K562 (cell line): ENCODE measurements at regions of chr22 and their contacts with region 1.

Region 1: GRCh38 chr22:38201710-38202436 is at the start of gene MAFF:
- DNase-seq: peak; percentile 89 to 97 (median 93)
- ATAC-seq: peak; percentile 85
- H3K4me3 ChIP-seq: peak within 1 kb of the TSS; percentile 82
- H3K27ac ChIP-seq: peak within 1 kb of the TSS; percentile 95
- H3K4me1 ChIP-seq: peaks cover 4 to 22% of the 10 kb centered on the region in 2 experiments; a peak in 3 of 5 replicates
- H3K27me3 ChIP-seq: no peaks in the 10 kb centered on the region
- CTCF ChIP-seq: no peak
- EP300 ChIP-seq: no peak
- POLR2A ChIP-seq: peak; percentile 79
- RAD21 ChIP-seq: no peak
- polyA plus RNA-seq, gene MAFF: 0.51 to 0.60 TPM

Region 2: DNA sequence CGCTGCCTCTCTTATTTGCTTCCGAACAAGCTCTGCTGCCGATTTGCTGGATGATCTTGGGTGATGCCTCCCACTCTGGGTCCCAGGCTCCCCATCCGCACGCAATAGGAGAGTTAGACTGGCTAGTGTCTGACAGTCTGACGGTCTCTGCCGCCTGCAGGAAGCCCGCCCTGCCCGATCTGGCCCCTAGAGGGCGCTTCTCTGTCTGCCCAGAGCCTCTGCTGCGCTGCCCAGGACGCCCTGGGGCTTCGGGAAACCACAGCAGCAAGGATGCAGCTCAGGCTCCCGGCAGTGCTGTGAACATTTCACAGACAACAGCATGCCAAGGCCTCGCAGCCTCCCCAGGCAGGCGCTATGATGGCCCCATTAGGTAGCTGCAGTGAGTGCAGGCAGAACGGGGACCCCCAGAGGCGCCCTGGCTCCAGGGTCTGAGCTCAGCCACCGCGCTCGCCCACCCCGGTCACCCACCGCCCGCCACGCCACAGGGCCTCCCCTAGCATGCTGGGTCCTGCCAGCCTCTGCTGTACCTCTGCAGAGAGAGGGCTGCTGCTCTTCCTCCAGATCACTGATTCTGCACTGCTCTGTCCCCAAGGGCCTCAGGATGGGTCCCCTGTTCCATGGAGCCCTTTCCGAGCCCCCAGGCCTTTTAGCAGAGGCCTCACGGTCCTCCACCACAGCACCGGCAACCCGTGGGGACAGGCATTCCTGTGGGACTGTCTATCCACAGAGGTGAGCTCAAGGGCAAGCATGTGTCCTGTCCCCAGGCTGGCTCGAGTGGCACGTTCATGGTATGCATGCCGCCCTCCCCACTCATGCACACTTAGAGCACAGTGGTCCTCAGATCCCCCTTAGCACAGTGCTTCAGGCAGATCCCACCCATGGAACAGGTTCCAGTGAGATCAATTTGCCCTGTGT is 87.1 kb before region 1 on chr22:
- CTCF ChIA-PET with region 1: no interaction called
- POLR2A ChIA-PET with region 1: interaction called, 5 read pairs
- in situ Hi-C with region 1: no loop called
- intact Hi-C with region 1: loop called (anchors 10 kb)
- DNase-seq: peak; percentile 75 to 80 (median 76)
- ATAC-seq: peak; percentile 98
- H3K4me3 ChIP-seq: no peak overlapping the region
- H3K27ac ChIP-seq: no peak overlapping the region
- H3K4me1 ChIP-seq: peaks cover 0 to 33% of the 10 kb centered on the region in 2 experiments; a peak in 2 of 5 replicates
- H3K27me3 ChIP-seq: no peaks in the 10 kb centered on the region
- CTCF ChIP-seq: peak; percentile 81 to 87 (median 85)
- EP300 ChIP-seq: no peak
- POLR2A ChIP-seq: no peak
- RAD21 ChIP-seq: peak; percentile 45 to 78

Region 3: GRCh38 chr22:38181453-38182247 is 20.2 kb before region 1 on chr22 and contains the start of gene PLA2G6:
- CTCF ChIA-PET with region 1: no interaction called
- POLR2A ChIA-PET with region 1: interaction called, 13 read pairs
- in situ Hi-C with region 1: no loop called
- intact Hi-C with region 1: no loop called
- DNase-seq: peak; percentile 97 to 98 (median 98)
- ATAC-seq: peak; percentile 91
- H3K4me3 ChIP-seq: peak within 1 kb of the TSS; percentile 49
- H3K27ac ChIP-seq: peak within 1 kb of the TSS; percentile 100
- H3K4me1 ChIP-seq: peaks cover 46% of the 10 kb centered on the region in 2 experiments
- H3K27me3 ChIP-seq: no peaks in the 10 kb centered on the region
- CTCF ChIP-seq: no peak
- EP300 ChIP-seq: no peak
- POLR2A ChIP-seq: peak; percentile 73
- RAD21 ChIP-seq: no peak
- polyA plus RNA-seq, gene PLA2G6: 0.11 to 0.13 TPM

Region 4: DNA sequence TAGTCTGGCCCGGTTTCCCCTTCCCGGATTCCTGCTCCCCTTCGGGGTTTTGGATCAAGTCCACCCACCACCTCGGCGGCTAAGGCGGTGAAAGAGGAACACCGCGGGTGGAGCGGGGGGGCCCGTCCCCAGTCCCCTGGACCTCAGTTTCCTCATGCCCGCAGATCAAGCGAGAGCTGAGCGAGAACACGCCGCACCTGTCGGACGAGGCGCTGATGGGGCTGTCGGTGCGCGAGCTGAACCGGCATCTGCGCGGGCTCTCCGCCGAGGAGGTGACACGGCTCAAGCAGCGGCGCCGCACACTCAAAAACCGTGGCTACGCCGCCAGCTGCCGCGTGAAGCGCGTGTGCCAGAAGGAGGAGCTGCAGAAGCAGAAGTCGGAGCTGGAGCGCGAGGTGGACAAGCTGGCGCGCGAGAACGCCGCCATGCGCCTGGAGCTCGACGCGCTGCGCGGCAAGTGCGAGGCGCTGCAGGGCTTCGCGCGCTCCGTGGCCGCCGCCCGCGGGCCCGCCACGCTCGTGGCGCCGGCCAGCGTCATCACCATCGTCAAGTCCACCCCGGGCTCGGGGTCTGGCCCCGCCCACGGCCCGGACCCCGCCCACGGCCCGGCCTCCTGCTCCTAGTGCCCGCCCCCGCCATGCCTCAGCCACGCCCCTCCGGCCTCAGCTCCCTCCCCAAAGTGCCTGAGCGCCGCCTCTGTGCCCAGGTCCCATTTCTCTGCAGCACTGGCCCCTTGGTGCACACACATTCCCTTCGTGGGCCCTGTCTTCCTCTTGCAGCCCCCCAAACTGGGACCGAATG is 12.6 kb after region 1 on chr22:
- CTCF ChIA-PET with region 1: no interaction called
- POLR2A ChIA-PET with region 1: interaction called, 44 read pairs
- in situ Hi-C with region 1: no loop called
- intact Hi-C with region 1: no loop called
- DNase-seq: peak; percentile 86 to 94 (median 92)
- ATAC-seq: peak; percentile 94
- H3K4me3 ChIP-seq: peak overlapping the region; percentile 24; the same call in 1 of the 2 replicates
- H3K27ac ChIP-seq: peak overlapping the region; percentile 38; the same call in 1 of the 3 replicates
- H3K4me1 ChIP-seq: peaks cover 10 to 31% of the 10 kb centered on the region in 2 experiments; a peak in 4 of 5 replicates
- H3K27me3 ChIP-seq: no peaks in the 10 kb centered on the region
- CTCF ChIP-seq: peak in 2 of 3 experiments; percentile 44 to 62; a peak in 4 of 6 replicates
- EP300 ChIP-seq: no peak
- POLR2A ChIP-seq: no peak
- RAD21 ChIP-seq: peak in 1 of 2 experiments; percentile 50; a peak in 3 of 4 replicates